ENCODE measurements at regions of chr7 and their contacts with region 1.

Region 1: DNA sequence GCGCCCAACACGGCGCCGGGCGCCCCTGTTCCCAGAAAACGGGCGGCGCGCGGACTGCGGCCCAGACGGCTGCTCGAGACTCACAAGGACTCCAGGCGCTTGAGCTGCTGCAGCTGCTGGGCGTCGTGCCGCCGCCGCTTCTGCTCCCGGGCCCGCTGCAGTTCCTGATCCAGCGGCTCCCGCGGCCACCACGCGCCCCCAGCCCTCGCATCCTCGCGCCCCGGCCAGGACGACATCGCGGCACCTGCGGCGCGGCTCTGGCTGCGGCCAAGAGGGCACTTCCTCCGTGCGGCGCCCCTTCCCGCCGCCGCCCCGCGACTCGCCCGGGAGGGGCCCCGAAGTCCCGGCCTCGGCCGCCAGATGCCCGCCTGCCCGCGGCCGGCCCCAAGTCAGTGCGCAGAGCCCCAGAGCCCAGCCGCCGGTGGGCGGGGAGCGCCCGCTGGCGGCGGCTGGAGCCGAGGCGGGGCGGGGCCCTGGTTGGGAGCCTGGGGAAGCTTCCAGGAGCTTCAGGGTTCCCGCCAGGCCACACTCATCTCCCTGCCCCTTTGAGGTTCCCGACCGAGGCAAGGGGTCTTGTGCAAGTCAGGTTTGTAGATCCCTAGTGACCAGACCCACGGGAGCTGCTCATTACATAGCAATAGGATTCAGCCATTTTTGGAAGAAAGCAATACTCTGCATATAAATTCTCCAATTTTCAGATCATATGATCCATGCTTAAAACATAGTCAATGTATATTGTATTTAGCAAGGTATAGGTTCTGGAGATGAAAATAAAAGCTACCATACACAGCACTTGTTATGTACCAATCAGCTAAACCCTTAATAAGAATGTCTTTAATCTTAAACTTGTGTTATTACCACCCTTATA is 14.2 kb upstream of the FKBP9 start:
- DNase-seq: peak; percentile 94
- H3K4me3 Mint-ChIP-seq: peak overlapping the region; percentile 91
- H3K27ac Mint-ChIP-seq: no peak overlapping the region
- H3K4me1 Mint-ChIP-seq: peaks cover 22% of the 10 kb centered on the region
- H3K27me3 Mint-ChIP-seq: no peaks in the 10 kb centered on the region
- CTCF ChIP-seq: peak; percentile 68

Region 2: GRCh38 chr7:32846701-32847100 is 96.3 kb before region 1 on chr7:
- CTCF ChIA-PET with region 1: interaction called, 17 read pairs
- intact Hi-C with region 1: no loop called
- DNase-seq: peak; percentile 96
- H3K4me3 Mint-ChIP-seq: no peak overlapping the region
- H3K27ac Mint-ChIP-seq: no peak overlapping the region
- H3K4me1 Mint-ChIP-seq: no peaks in the 10 kb centered on the region
- H3K27me3 Mint-ChIP-seq: no peaks in the 10 kb centered on the region
- CTCF ChIP-seq: peak; percentile 98

Region 3: GRCh38 chr7:32891800-32892520 is 51.1 kb before region 1 on chr7:
- CTCF ChIA-PET with region 1: interaction called, 4 read pairs
- intact Hi-C with region 1: loop called (anchors 2 kb)
- DNase-seq: peak; percentile 98
- H3K4me3 Mint-ChIP-seq: peak overlapping the region; percentile 89
- H3K27ac Mint-ChIP-seq: peak overlapping the region; percentile 88
- H3K4me1 Mint-ChIP-seq: peaks cover 51% of the 10 kb centered on the region
- H3K27me3 Mint-ChIP-seq: peaks cover 7% of the 10 kb centered on the region
- CTCF ChIP-seq: no peak